GM10248 (cell line): ENCODE measurements at regions of chr3 and their contacts with region 1.

Region 1: GRCh38 chr3:112117841-112118571 is 15.0 kb downstream of the GCSAM start:
- DNase-seq: peak; percentile 31
- CTCF ChIP-seq: peak; percentile 28

Region 2: DNA sequence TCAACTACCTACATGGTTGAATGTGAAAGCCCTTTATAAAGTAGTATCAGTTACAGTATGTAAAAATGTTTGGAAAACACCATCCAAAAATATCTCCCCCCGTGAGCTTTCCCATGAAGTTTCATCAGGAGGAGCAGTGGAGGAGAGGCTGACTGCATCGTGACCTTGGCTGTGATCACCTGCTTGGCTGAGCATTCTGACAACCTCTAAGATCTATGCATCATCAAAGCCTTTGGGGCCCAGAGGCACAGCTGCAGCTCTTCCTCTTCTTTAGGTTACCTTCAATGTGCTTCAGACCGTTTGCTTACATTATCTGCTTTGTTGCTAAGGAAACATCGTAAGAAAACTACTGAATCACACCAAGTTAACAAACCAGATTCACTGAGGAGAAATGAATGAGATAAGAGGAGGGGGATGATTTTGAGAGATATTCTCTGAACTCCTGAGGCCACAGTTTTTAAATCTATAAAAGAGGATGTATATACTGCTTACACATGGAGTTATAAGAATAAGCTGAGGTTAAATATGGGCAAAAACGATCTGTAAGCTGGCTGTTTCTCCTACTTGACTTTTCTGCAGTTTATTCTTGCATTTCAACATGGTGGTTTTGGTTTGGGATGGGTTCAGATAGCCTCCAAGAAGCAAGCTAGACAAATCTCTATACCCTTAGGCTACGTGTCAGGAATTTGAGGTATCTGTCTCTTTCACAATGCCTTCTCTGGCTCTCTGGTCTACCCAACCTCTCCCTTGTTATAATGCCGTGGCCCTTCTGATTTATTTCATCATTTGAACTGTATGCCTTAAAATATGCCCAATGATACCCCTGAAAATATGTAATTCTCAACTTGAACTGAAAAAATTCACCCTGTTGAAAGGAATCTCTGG is 11.1 kb after region 1 on chr3:
- CTCF ChIA-PET with region 1: interaction called, 94 read pairs
- POLR2A ChIA-PET with region 1: interaction called, 19 read pairs
- DNase-seq: peak; percentile 40
- CTCF ChIP-seq: no peak

Region 3: GRCh38 chr3:112456147-112456546 is 338.1 kb after region 1 on chr3:
- CTCF ChIA-PET with region 1: no interaction called
- POLR2A ChIA-PET with region 1: no interaction called
- DNase-seq: no peak
- CTCF ChIP-seq: no peak